HepG2 (cell line): ENCODE measurements at regions of chr7 and their contacts with region 1.

Region 1: GRCh38 chr7:107168233-107169119 is at the start of gene HBP1:
- DNase-seq: peak; percentile 100
- ATAC-seq: peak; percentile 94
- H3K4me3 ChIP-seq: peak within 1 kb of the TSS; percentile 97 to 100 (median 98)
- H3K27ac ChIP-seq: peak within 1 kb of the TSS; percentile 96
- H3K4me1 ChIP-seq: peaks cover 7% of the 10 kb centered on the region
- H3K27me3 ChIP-seq: no peaks in the 10 kb centered on the region; a peak in 1 of 5 replicates
- CTCF ChIP-seq: no peak
- EP300 ChIP-seq: no peak; a peak in 1 of 4 replicates
- POLR2A ChIP-seq: peak; percentile 47 to 67; a peak in 3 of 4 replicates
- RAD21 ChIP-seq: peak; percentile 38; the same call in 1 of the 2 replicates
- total RNA-seq, gene HBP1: 22.9 and 29.8 TPM in 2 replicates

Region 2: GRCh38 chr7:106285051-106285854 is 883.2 kb before region 1 on chr7:
- CTCF ChIA-PET with region 1: no interaction called
- POLR2A ChIA-PET with region 1: interaction called, 5 read pairs
- in situ Hi-C with region 1: no loop called
- intact Hi-C with region 1: loop called (anchors 10 kb)
- DNase-seq: peak; percentile 95
- ATAC-seq: peak; percentile 91
- H3K4me3 ChIP-seq: peak overlapping the region; percentile 83 to 90 (median 88)
- H3K27ac ChIP-seq: peak overlapping the region; percentile 85
- H3K4me1 ChIP-seq: peaks cover 44% of the 10 kb centered on the region
- H3K27me3 ChIP-seq: peaks cover 0 to under 1% of the 10 kb centered on the region in 2 experiments; a peak in 1 of 5 replicates
- CTCF ChIP-seq: no peak
- EP300 ChIP-seq: peak in 1 of 2 experiments; percentile 41; a peak in 1 of 4 replicates
- POLR2A ChIP-seq: peak; percentile 55 to 87
- RAD21 ChIP-seq: no peak

Region 3: GRCh38 chr7:107150375-107151073 is 18.0 kb before region 1 on chr7:
- CTCF ChIA-PET with region 1: interaction called, 3 read pairs
- POLR2A ChIA-PET with region 1: interaction called, 15 read pairs
- in situ Hi-C with region 1: no loop called
- intact Hi-C with region 1: loop called (anchors 2 kb)
- DNase-seq: peak; percentile 40
- ATAC-seq: peak; percentile 53; the same call in 1 of the 3 replicates
- H3K4me3 ChIP-seq: no peak overlapping the region
- H3K27ac ChIP-seq: no peak overlapping the region
- H3K4me1 ChIP-seq: no peaks in the 10 kb centered on the region
- H3K27me3 ChIP-seq: peaks cover 2 to 3% of the 10 kb centered on the region in 2 experiments; a peak in 3 of 5 replicates
- CTCF ChIP-seq: peak; percentile 59
- EP300 ChIP-seq: no peak
- POLR2A ChIP-seq: no peak
- RAD21 ChIP-seq: no peak

Region 4: GRCh38 chr7:107180378-107180777 is 11.9 kb after region 1 on chr7:
- CTCF ChIA-PET with region 1: no interaction called
- POLR2A ChIA-PET with region 1: interaction called, 24 read pairs
- in situ Hi-C with region 1: no loop called
- intact Hi-C with region 1: no loop called
- DNase-seq: peak; percentile 22
- ATAC-seq: no peak
- H3K4me3 ChIP-seq: no peak overlapping the region
- H3K27ac ChIP-seq: no peak overlapping the region
- H3K4me1 ChIP-seq: peaks cover 14% of the 10 kb centered on the region
- H3K27me3 ChIP-seq: no peaks in the 10 kb centered on the region
- CTCF ChIP-seq: no peak
- EP300 ChIP-seq: no peak
- POLR2A ChIP-seq: no peak
- RAD21 ChIP-seq: no peak

Region 5: DNA sequence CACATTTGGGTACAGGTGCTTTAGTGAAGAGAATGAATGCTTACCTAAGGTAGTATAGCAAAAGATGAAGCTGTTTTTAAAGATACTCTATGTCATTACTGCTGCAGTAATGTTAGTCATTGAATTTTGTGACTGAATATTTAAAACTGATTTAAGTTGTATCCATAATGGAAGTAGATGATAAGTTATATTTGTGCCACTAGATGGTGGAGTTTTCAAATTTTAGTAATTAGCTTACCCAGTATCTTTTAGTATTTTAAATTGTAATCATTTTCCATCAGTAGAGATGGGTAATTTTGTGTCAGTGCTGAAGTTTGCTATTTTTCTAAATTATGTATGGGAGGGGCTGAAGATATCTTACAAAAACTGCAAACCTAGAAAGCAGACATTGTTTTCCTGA is 25.6 kb after region 1 on chr7:
- CTCF ChIA-PET with region 1: no interaction called
- POLR2A ChIA-PET with region 1: interaction called, 15 read pairs
- in situ Hi-C with region 1: no loop called
- intact Hi-C with region 1: no loop called
- DNase-seq: no peak
- ATAC-seq: no peak
- H3K4me3 ChIP-seq: no peak overlapping the region
- H3K27ac ChIP-seq: no peak overlapping the region
- H3K4me1 ChIP-seq: no peaks in the 10 kb centered on the region
- H3K27me3 ChIP-seq: no peaks in the 10 kb centered on the region
- CTCF ChIP-seq: no peak
- EP300 ChIP-seq: no peak
- POLR2A ChIP-seq: no peak
- RAD21 ChIP-seq: no peak

Region 6: GRCh38 chr7:107302250-107302847 is 133.9 kb after region 1 on chr7:
- CTCF ChIA-PET with region 1: no interaction called
- POLR2A ChIA-PET with region 1: no interaction called
- in situ Hi-C with region 1: no loop called
- intact Hi-C with region 1: no loop called
- DNase-seq: no peak
- ATAC-seq: no peak
- H3K4me3 ChIP-seq: no peak overlapping the region
- H3K27ac ChIP-seq: no peak overlapping the region
- H3K4me1 ChIP-seq: no peaks in the 10 kb centered on the region
- H3K27me3 ChIP-seq: no peaks in the 10 kb centered on the region
- CTCF ChIP-seq: no peak
- EP300 ChIP-seq: no peak
- POLR2A ChIP-seq: no peak
- RAD21 ChIP-seq: no peak

Region 7: DNA sequence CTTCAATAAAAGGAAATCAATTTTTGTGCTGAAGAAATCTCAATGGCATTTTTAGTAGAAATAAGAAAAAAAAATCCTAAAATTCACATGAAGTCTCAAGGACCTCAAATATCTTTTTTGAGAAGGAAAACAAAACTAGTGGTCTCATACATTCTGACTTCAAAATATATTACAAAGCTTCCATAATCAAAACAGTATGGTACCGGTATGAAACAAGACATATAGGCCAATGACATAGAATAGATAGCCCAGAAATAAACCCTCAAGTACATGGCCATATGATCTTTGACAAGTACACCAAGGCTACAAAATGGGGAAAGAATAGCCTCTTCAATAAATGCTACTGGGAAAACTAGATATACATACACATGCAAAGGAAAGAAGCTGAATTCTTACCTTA is 169.6 kb after region 1 on chr7:
- CTCF ChIA-PET with region 1: no interaction called
- POLR2A ChIA-PET with region 1: no interaction called
- in situ Hi-C with region 1: no loop called
- intact Hi-C with region 1: no loop called
- DNase-seq: no peak
- ATAC-seq: no peak
- H3K4me3 ChIP-seq: no peak overlapping the region
- H3K27ac ChIP-seq: no peak overlapping the region
- H3K4me1 ChIP-seq: no peaks in the 10 kb centered on the region
- H3K27me3 ChIP-seq: no peaks in the 10 kb centered on the region
- CTCF ChIP-seq: no peak
- EP300 ChIP-seq: no peak
- POLR2A ChIP-seq: no peak
- RAD21 ChIP-seq: no peak